ENCODE measurements at regions of chr18 and their contacts with region 1.

Region 1: GRCh38 chr18:23953984-23954383 is 60.6 kb upstream of the TTC39C start:
- DNase-seq: no peak
- H3K4me3 ChIP-seq: no peak overlapping the region
- H3K27ac ChIP-seq: no peak overlapping the region
- H3K4me1 ChIP-seq: peaks cover 0 to 4% of the 10 kb centered on the region in 2 donors
- H3K27me3 ChIP-seq: no peaks in the 10 kb centered on the region
- CTCF ChIP-seq: no peak
- POLR2A ChIP-seq: no peak

Region 2: GRCh38 chr18:23779696-23780303 is 174.2 kb before region 1 on chr18:
- intact Hi-C with region 1: no loop called
- DNase-seq: no peak
- H3K4me3 ChIP-seq: no peak overlapping the region
- H3K27ac ChIP-seq: no peak overlapping the region
- H3K4me1 ChIP-seq: no peaks in the 10 kb centered on the region
- H3K27me3 ChIP-seq: no peaks in the 10 kb centered on the region
- CTCF ChIP-seq: no peak
- POLR2A ChIP-seq: no peak

Region 3: GRCh38 chr18:23990474-23991410 is 36.8 kb after region 1 on chr18:
- intact Hi-C with region 1: loop called (anchors 2 kb)
- DNase-seq: no peak
- H3K4me3 ChIP-seq: no peak overlapping the region
- H3K27ac ChIP-seq: no peak overlapping the region
- H3K4me1 ChIP-seq: peaks cover 13 to 32% of the 10 kb centered on the region in 2 donors
- H3K27me3 ChIP-seq: no peaks in the 10 kb centered on the region
- CTCF ChIP-seq: no peak
- POLR2A ChIP-seq: no peak

Region 4: DNA sequence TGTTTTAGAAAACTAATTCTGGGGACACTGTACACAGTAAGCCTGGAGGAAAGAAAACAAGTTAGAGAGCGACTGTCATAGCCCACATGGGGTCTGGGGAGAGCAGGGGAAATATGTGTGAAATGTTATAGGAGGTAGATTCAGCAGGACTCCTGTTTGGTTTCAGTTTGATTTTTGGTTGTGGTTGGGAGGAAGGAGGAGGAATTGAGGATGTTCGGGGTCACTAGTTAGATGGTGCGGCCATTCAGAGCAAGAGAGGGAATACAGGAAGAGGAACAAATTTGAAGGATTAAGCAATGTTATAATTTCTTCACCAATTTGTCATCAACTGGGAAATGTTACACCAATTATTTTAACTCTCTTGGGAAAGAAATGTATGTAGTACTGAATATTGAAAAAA is 85.7 kb after region 1 on chr18:
- intact Hi-C with region 1: no loop called
- DNase-seq: no peak
- H3K4me3 ChIP-seq: no peak overlapping the region
- H3K27ac ChIP-seq: no peak overlapping the region
- H3K4me1 ChIP-seq: no peaks in the 10 kb centered on the region
- H3K27me3 ChIP-seq: no peaks in the 10 kb centered on the region
- CTCF ChIP-seq: no peak
- POLR2A ChIP-seq: no peak

Measured in thyroid gland (tissue), 4 donors.